Posterior cingulate gyrus (tissue), 11 donors: ENCODE measurements at regions of chr2 and their contacts with region 1.

Region 1: GRCh38 chr2:20378792-20379519 is 28.3 kb upstream of the PUM2 start:
- DNase-seq: peak; percentile 45 to 97 (median 77)

Region 2: DNA sequence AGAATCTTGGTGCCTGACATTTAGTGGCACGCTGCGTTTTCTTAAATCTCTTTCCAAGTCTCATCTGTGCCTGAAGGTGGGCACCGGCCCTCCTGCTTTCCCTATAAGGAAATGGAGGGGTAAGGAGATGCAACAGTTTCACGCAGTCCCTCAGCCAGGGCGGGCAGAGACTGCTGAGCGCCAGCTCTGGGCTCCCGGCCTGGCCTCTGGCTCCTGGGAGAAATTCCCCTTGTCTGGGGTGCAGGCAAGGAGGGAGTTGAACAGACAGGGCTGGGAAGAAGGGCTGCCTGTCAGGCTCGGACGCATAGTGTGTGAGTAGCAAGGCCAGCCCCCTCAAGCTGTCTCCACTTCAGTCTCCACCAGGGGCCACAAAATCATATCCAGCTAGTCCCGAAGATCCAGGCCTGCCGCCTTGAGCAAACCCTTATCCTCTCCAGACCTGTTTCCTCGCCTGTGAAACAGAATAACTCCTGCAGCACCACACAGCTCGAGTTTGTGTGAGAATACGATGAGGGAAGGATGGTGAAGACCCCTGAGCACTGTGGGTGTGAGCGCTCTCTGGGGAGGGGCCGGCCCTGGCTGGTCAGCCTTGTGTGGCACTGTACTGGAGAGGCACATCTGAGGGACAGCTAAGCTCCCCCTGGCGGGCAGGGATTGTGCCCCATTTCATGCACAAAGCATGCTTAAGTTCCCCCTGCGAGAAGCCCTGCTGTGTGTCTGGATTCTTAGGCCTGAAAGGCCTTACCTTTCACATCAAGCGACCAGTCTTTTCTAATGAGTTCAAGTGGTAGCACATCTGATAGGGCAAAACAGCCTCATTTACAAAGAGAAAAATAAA is 187.9 kb before region 1 on chr2:
- intact Hi-C with region 1: no loop called
- DNase-seq: no peak

Region 3: GRCh38 chr2:20333738-20334137 is 45.2 kb before region 1 on chr2:
- intact Hi-C with region 1: no loop called
- DNase-seq: no peak

Region 4: GRCh38 chr2:20422402-20423271 is 43.7 kb after region 1 on chr2:
- intact Hi-C with region 1: loop called (anchors 2 kb)
- DNase-seq: peak in 3 of 10 donors; percentile 36 to 87 (median 59)

Region 5: GRCh38 chr2:20466417-20466911 is 87.5 kb after region 1 on chr2:
- intact Hi-C with region 1: no loop called
- DNase-seq: peak in 1 of 10 donors; percentile 31

Region 6: GRCh38 chr2:20642055-20642971 is 263.4 kb after region 1 on chr2:
- intact Hi-C with region 1: loop called (anchors 5 kb)
- DNase-seq: peak; percentile 71 to 97 (median 84)